CD4-positive, alpha-beta T cell (primary cell): ENCODE measurements at regions of chr7 and their contacts with region 1.

Region 1: GRCh38 chr7:7681179-7681935 is 37.0 kb downstream of the RPA3 start:
- DNase-seq: peak in 9 of 14 experiments; percentile 9 to 77 (median 19)
- ATAC-seq: peak; percentile 85
- H3K4me3 ChIP-seq: no peak overlapping the region
- H3K4me3 Mint-ChIP-seq: no peak overlapping the region
- H3K27ac ChIP-seq: no peak overlapping the region
- H3K27ac Mint-ChIP-seq: peak overlapping the region; percentile 64
- H3K4me1 ChIP-seq: no peaks in the 10 kb centered on the region
- H3K4me1 Mint-ChIP-seq: peaks cover 45% of the 10 kb centered on the region
- H3K27me3 ChIP-seq: no peaks in the 10 kb centered on the region
- H3K27me3 Mint-ChIP-seq: no peaks in the 10 kb centered on the region
- CTCF ChIP-seq: peak; percentile 78

Region 2: DNA sequence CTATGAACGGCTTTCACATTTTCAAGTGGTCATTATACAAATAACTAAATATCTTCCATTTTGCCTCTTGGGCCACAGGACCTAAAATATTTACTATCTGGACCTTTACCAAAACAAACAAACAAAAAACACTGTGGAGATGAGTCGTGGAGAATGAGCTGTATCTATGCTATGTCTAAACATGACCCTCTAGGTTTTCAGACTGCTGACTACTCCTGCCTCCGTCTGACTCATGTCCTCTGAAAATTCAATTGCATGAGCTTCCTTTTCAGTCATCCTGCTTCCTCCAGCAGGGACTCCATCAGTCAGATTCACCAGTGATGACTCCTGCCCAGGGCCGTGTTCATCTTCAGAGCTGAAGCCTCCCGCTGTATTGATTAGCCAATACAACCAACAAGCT is 242.5 kb before region 1 on chr7:
- CTCF ChIA-PET with region 1: no interaction called
- POLR2A ChIA-PET with region 1: no interaction called
- intact Hi-C with region 1: no loop called
- DNase-seq: no peak
- ATAC-seq: no peak
- H3K4me3 ChIP-seq: no peak overlapping the region
- H3K4me3 Mint-ChIP-seq: no peak overlapping the region
- H3K27ac ChIP-seq: no peak overlapping the region
- H3K27ac Mint-ChIP-seq: no peak overlapping the region
- H3K4me1 ChIP-seq: no peaks in the 10 kb centered on the region
- H3K4me1 Mint-ChIP-seq: peaks cover 7% of the 10 kb centered on the region
- H3K27me3 ChIP-seq: no peaks in the 10 kb centered on the region
- H3K27me3 Mint-ChIP-seq: no peaks in the 10 kb centered on the region
- CTCF ChIP-seq: no peak

Region 3: GRCh38 chr7:7595451-7595850 is 85.9 kb before region 1 on chr7:
- CTCF ChIA-PET with region 1: interaction called, 4 read pairs
- POLR2A ChIA-PET with region 1: no interaction called
- intact Hi-C with region 1: loop called in 1 of 2 experiments (anchors 5 kb)
- DNase-seq: peak in 3 of 14 experiments; percentile 56
- ATAC-seq: peak; percentile 58
- H3K4me3 ChIP-seq: no peak overlapping the region
- H3K4me3 Mint-ChIP-seq: no peak overlapping the region
- H3K27ac ChIP-seq: no peak overlapping the region
- H3K27ac Mint-ChIP-seq: no peak overlapping the region
- H3K4me1 ChIP-seq: no peaks in the 10 kb centered on the region
- H3K4me1 Mint-ChIP-seq: no peaks in the 10 kb centered on the region
- H3K27me3 ChIP-seq: no peaks in the 10 kb centered on the region
- H3K27me3 Mint-ChIP-seq: no peaks in the 10 kb centered on the region
- CTCF ChIP-seq: peak; percentile 54

Region 4: DNA sequence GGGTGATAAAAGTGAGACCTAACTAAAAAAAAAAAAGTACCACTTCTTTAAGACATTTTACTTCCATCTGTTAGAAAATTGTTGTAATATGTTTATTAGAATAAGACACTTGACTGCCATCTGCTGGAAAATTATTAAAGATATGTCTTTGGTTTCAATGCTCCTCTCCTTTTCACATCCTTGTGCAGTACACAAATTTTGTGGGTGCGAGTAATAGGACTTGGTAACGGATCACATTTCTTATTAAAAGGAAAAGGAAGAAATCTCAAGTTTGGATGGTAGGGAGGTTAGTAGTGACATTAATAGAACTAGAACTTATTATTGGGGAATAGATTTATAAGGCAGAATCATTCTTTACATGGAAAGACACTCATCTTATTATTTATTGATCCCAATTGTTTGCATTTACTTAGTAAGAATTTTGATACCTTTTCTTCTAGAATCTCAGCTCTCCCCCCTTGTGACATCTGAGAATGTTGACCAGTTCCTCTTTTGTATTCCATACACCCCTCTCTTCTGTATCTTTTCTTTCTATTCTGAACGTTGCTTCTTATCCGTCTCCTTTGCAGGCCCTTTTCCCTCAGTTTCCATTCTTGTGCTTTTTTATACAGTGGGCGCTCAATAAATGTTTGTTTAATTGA is 80.1 kb after region 1 on chr7:
- CTCF ChIA-PET with region 1: interaction called, 13 read pairs
- POLR2A ChIA-PET with region 1: interaction called, 10 read pairs
- intact Hi-C with region 1: loop called (anchors 1 to 2 kb)
- DNase-seq: peak in 3 of 14 experiments; percentile 62 to 75 (median 73)
- ATAC-seq: peak; percentile 27
- H3K4me3 ChIP-seq: peak overlapping the region; percentile 55
- H3K4me3 Mint-ChIP-seq: peak overlapping the region; percentile 94
- H3K27ac ChIP-seq: peak overlapping the region; percentile 31 to 39
- H3K27ac Mint-ChIP-seq: peak overlapping the region; percentile 99
- H3K4me1 ChIP-seq: peaks cover 11% of the 10 kb centered on the region
- H3K4me1 Mint-ChIP-seq: peaks cover 51% of the 10 kb centered on the region
- H3K27me3 ChIP-seq: no peaks in the 10 kb centered on the region
- H3K27me3 Mint-ChIP-seq: no peaks in the 10 kb centered on the region
- CTCF ChIP-seq: peak; percentile 25

Region 5: GRCh38 chr7:8051373-8051772 is 370.0 kb after region 1 on chr7:
- CTCF ChIA-PET with region 1: no interaction called
- POLR2A ChIA-PET with region 1: no interaction called
- intact Hi-C with region 1: loop called in 1 of 2 experiments (anchors 5 kb)
- DNase-seq: no peak
- ATAC-seq: no peak
- H3K4me3 ChIP-seq: no peak overlapping the region
- H3K4me3 Mint-ChIP-seq: no peak overlapping the region
- H3K27ac ChIP-seq: no peak overlapping the region
- H3K27ac Mint-ChIP-seq: no peak overlapping the region
- H3K4me1 ChIP-seq: no peaks in the 10 kb centered on the region
- H3K4me1 Mint-ChIP-seq: peaks cover 56% of the 10 kb centered on the region
- H3K27me3 ChIP-seq: no peaks in the 10 kb centered on the region
- H3K27me3 Mint-ChIP-seq: no peaks in the 10 kb centered on the region
- CTCF ChIP-seq: no peak

Region 6: GRCh38 chr7:8190119-8190895 is 508.9 kb after region 1 on chr7:
- CTCF ChIA-PET with region 1: interaction called, 7 read pairs
- POLR2A ChIA-PET with region 1: interaction called, 8 read pairs
- intact Hi-C with region 1: loop called (anchors 1 kb)
- DNase-seq: peak; percentile 40 to 85 (median 66)
- ATAC-seq: peak; percentile 97
- H3K4me3 ChIP-seq: no peak overlapping the region
- H3K4me3 Mint-ChIP-seq: no peak overlapping the region
- H3K27ac ChIP-seq: no peak overlapping the region
- H3K27ac Mint-ChIP-seq: peak overlapping the region; percentile 24
- H3K4me1 ChIP-seq: peaks cover 8% of the 10 kb centered on the region
- H3K4me1 Mint-ChIP-seq: peaks cover 32% of the 10 kb centered on the region
- H3K27me3 ChIP-seq: no peaks in the 10 kb centered on the region
- H3K27me3 Mint-ChIP-seq: no peaks in the 10 kb centered on the region
- CTCF ChIP-seq: peak; percentile 86

Region 7: GRCh38 chr7:8536431-8536830 is 855.1 kb after region 1 on chr7:
- CTCF ChIA-PET with region 1: no interaction called
- POLR2A ChIA-PET with region 1: no interaction called
- intact Hi-C with region 1: no loop called
- DNase-seq: no peak
- ATAC-seq: no peak
- H3K4me3 ChIP-seq: no peak overlapping the region
- H3K4me3 Mint-ChIP-seq: no peak overlapping the region
- H3K27ac ChIP-seq: no peak overlapping the region
- H3K27ac Mint-ChIP-seq: no peak overlapping the region
- H3K4me1 ChIP-seq: no peaks in the 10 kb centered on the region
- H3K4me1 Mint-ChIP-seq: no peaks in the 10 kb centered on the region
- H3K27me3 ChIP-seq: no peaks in the 10 kb centered on the region
- H3K27me3 Mint-ChIP-seq: no peaks in the 10 kb centered on the region
- CTCF ChIP-seq: no peak